Esophagus muscularis mucosa (tissue), 4 donors: ENCODE measurements at regions of chr15 and their contacts with region 1.

Region 1: DNA sequence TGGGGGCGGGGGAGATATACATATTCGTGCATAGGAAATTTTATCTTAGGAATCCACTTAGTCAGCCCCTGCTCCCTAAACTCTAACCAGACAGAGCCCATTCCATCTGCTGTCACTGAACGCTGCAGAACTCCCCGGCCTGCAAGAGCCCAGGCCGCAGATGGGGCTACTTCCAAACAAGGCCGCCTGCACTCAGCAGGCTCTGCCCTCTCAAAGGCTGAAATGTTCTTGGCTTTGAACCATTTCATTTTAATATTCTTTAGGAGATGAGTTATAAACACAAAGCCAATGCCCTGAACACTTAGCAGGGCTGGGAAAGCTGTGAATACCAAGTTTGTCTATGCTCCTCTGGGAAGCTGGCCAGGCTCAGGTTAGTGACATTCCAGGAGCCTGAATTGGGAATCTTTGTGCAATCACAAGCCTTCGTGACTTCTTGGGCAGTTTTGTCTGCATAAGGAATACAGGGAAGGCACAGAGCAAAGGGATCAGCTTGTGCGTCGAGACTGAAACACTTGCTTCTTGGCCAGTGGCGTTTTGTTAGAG is 65.0 kb downstream of the SYNM start:
- DNase-seq: peak; percentile 93
- H3K4me3 ChIP-seq: no peak overlapping the region
- H3K27ac ChIP-seq: peak overlapping the region; percentile 95 to 99 (median 98)
- H3K4me1 ChIP-seq: peaks cover 59 to 97% (median 93%) of the 10 kb centered on the region in 4 donors
- H3K27me3 ChIP-seq: no peaks in the 10 kb centered on the region
- CTCF ChIP-seq: no peak
- EP300 ChIP-seq: peak; percentile 94
- POLR2A ChIP-seq: no peak

Region 2: GRCh38 chr15:99104788-99105513 is 64.9 kb before region 1 on chr15 and contains the start of gene SYNM:
- intact Hi-C with region 1: loop called (anchors 5 kb)
- DNase-seq: no peak
- H3K4me3 ChIP-seq: peak within 1 kb of the TSS; percentile 77 to 91 (median 88)
- H3K27ac ChIP-seq: peak within 1 kb of the TSS; percentile 97 to 98 (median 98)
- H3K4me1 ChIP-seq: peaks cover 10 to 58% (median 48%) of the 10 kb centered on the region in 4 donors
- H3K27me3 ChIP-seq: peaks cover 0 to 5% (median 0%) of the 10 kb centered on the region in 4 donors
- CTCF ChIP-seq: peak; percentile 90 to 97 (median 90)
- EP300 ChIP-seq: no peak
- POLR2A ChIP-seq: peak; percentile 91
- total RNA-seq, gene SYNM: 1,866 to 2,563 (median 2,454) TPM

Region 3: GRCh38 chr15:99123706-99124451 is 46.0 kb before region 1 on chr15:
- intact Hi-C with region 1: loop called (anchors 5 kb)
- DNase-seq: no peak
- H3K4me3 ChIP-seq: peak overlapping the region; percentile 9 to 46 (median 37)
- H3K27ac ChIP-seq: peak overlapping the region; percentile 97 to 98 (median 98)
- H3K4me1 ChIP-seq: peaks cover 62 to 100% (median 100%) of the 10 kb centered on the region in 4 donors
- H3K27me3 ChIP-seq: no peaks in the 10 kb centered on the region
- CTCF ChIP-seq: no peak
- EP300 ChIP-seq: no peak
- POLR2A ChIP-seq: no peak

Region 4: DNA sequence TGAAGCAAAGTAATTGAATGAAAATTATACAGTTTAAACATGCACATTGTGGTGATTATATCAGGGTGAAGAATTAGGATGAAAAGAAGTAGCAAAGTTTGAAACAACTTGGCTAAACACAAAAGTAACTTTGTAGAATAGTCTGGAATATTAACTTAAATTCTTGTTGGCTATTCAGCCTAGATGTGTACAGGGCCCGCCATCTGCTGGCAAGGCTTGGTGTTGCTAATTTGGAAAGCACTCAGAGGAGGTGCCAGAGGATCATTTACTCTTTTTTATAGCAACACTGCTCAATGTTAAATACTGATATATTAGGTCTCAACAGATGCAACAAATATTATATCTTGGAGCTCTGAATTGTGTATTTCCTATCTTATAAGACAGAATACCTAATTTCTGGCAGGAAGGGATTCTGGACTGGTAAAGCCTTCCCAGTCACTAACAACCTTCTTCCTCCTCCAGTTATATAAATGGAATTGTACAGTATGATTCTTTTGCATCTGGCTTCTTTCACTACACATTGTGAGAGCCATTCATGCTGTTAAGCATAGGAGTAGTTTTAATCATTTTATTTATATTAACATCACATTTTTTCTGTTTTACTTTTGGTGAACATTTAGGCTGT is 43.5 kb after region 1 on chr15:
- intact Hi-C with region 1: loop called (anchors 2 kb)
- DNase-seq: no peak
- H3K4me3 ChIP-seq: no peak overlapping the region
- H3K27ac ChIP-seq: peak overlapping the region; percentile 80 to 92 (median 84)
- H3K4me1 ChIP-seq: peaks cover 5 to 58% (median 53%) of the 10 kb centered on the region in 4 donors
- H3K27me3 ChIP-seq: no peaks in the 10 kb centered on the region
- CTCF ChIP-seq: peak; percentile 94 to 99 (median 94)
- EP300 ChIP-seq: no peak
- POLR2A ChIP-seq: no peak

Region 5: GRCh38 chr15:99402014-99402729 is 232.3 kb after region 1 on chr15:
- intact Hi-C with region 1: no loop called
- DNase-seq: no peak
- H3K4me3 ChIP-seq: no peak overlapping the region
- H3K27ac ChIP-seq: peak overlapping the region in 3 of 4 donors; percentile 21 to 52 (median 50)
- H3K4me1 ChIP-seq: peaks cover 11 to 13% (median 12%) of the 10 kb centered on the region in 4 donors
- H3K27me3 ChIP-seq: no peaks in the 10 kb centered on the region
- CTCF ChIP-seq: no peak
- EP300 ChIP-seq: no peak
- POLR2A ChIP-seq: no peak